Dendritic cell treated with granulocyte-macrophage colony-stimulating factor and Interleukin-4, amounts not matched to agents 40 ng/mL and 50 ng/mL, for 4 days (primary cell): ENCODE measurements at regions of chr19 and their contacts with region 1.

Region 1: DNA sequence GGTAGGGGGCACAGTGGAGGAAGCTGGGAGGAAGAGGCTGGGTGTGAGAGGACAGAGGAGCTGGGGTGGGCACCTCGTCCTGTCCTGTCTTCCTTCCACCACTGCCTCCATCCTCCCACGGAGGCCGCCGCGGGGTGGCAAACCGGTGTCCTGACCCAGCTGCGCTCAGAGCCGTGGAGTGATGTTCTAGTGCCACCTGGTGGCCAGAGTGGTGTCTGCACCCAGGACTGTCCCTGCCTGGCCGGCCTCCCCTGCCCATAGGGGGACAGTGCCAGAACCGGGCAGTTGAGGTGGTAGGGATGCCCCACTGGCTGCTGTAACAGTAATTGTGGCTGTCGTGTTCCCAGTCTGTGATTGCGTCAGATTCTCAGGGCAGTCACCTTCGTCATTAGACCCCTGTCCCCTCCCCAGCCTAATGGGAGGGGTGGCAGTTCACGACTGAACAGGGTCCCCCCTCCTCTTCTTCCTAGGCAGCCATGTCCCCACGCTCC is 11.1 kb upstream of the ARRDC2 start:
- H3K4me3 Mint-ChIP-seq: no peak overlapping the region
- H3K27ac Mint-ChIP-seq: peak overlapping the region; percentile 91
- H3K4me1 Mint-ChIP-seq: peaks cover 44% of the 10 kb centered on the region
- H3K27me3 Mint-ChIP-seq: peaks cover 16% of the 10 kb centered on the region

Region 2: GRCh38 chr19:17926044-17926443 is 70.8 kb before region 1 on chr19:
- intact Hi-C with region 1: no loop called
- H3K4me3 Mint-ChIP-seq: no peak overlapping the region
- H3K27ac Mint-ChIP-seq: no peak overlapping the region
- H3K4me1 Mint-ChIP-seq: no peaks in the 10 kb centered on the region
- H3K27me3 Mint-ChIP-seq: peaks cover 4% of the 10 kb centered on the region

Region 3: GRCh38 chr19:17938092-17938845 is 58.6 kb before region 1 on chr19:
- intact Hi-C with region 1: loop called (anchors 1 kb)
- H3K4me3 Mint-ChIP-seq: no peak overlapping the region
- H3K27ac Mint-ChIP-seq: no peak overlapping the region
- H3K4me1 Mint-ChIP-seq: peaks cover 10% of the 10 kb centered on the region
- H3K27me3 Mint-ChIP-seq: no peaks in the 10 kb centered on the region

Region 4: DNA sequence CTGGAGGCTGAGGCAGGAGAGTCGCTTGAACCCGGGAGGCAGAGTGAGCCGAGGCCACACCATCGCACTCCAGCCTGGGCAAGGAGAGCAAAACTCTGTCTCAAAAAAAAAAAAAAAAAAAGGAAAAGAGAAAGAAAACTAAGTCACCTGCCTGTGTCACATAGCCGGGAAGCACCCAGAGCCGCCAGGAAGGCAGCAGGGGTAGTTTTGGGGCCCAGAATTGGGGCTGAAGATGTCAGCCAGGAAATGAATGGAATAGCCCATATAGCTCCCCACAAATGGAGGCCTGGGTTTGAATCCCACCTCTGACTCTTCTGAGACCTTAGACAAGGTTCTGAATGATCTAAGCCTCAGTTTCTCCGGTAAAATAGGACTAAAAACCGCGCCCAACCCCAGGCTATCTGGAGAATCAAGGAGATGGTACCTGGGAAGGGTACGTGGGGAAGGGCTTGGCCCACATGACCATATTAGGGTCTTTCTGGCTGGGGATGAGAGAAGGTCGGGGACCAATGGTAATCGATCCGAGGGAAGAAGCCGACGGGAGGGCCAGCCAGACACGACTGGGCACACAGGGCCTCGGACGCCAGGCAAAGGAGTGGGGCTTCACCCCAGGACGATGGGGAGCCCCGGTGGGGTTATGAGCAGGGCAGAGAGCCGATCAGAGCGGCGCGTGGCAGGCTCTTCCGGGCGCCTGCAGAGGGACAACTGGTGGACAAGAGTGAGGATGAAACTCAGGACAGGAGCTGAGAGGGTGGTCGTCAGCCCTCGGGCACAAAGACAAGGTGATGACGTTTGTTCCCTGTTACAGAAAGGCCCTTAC is 49.7 kb before region 1 on chr19:
- intact Hi-C with region 1: loop called (anchors 1 kb)
- H3K4me3 Mint-ChIP-seq: peak overlapping the region; percentile 85
- H3K27ac Mint-ChIP-seq: peak overlapping the region; percentile 79
- H3K4me1 Mint-ChIP-seq: peaks cover 53% of the 10 kb centered on the region
- H3K27me3 Mint-ChIP-seq: peaks cover 43% of the 10 kb centered on the region